ENCODE measurements at regions of chr7 and their contacts with region 1.

Region 1: GRCh38 chr7:88725754-88726153 is 33.7 kb upstream of the ZNF804B start:
- DNase-seq: no peak
- H3K4me3 ChIP-seq: no peak overlapping the region
- H3K27ac ChIP-seq: no peak overlapping the region
- H3K4me1 ChIP-seq: no peaks in the 10 kb centered on the region
- H3K27me3 ChIP-seq: no peaks in the 10 kb centered on the region
- CTCF ChIP-seq: no peak
- POLR2A ChIP-seq: no peak

Region 2: GRCh38 chr7:88735920-88736319 is 10.2 kb after region 1 on chr7:
- CTCF ChIA-PET with region 1: no interaction called
- POLR2A ChIA-PET with region 1: no interaction called
- dilution Hi-C with region 1: no loop called
- intact Hi-C with region 1: loop called (anchors 1 kb)
- DNase-seq: no peak
- H3K4me3 ChIP-seq: no peak overlapping the region
- H3K27ac ChIP-seq: no peak overlapping the region
- H3K4me1 ChIP-seq: no peaks in the 10 kb centered on the region
- H3K27me3 ChIP-seq: no peaks in the 10 kb centered on the region
- CTCF ChIP-seq: no peak
- POLR2A ChIP-seq: no peak

Region 3: DNA sequence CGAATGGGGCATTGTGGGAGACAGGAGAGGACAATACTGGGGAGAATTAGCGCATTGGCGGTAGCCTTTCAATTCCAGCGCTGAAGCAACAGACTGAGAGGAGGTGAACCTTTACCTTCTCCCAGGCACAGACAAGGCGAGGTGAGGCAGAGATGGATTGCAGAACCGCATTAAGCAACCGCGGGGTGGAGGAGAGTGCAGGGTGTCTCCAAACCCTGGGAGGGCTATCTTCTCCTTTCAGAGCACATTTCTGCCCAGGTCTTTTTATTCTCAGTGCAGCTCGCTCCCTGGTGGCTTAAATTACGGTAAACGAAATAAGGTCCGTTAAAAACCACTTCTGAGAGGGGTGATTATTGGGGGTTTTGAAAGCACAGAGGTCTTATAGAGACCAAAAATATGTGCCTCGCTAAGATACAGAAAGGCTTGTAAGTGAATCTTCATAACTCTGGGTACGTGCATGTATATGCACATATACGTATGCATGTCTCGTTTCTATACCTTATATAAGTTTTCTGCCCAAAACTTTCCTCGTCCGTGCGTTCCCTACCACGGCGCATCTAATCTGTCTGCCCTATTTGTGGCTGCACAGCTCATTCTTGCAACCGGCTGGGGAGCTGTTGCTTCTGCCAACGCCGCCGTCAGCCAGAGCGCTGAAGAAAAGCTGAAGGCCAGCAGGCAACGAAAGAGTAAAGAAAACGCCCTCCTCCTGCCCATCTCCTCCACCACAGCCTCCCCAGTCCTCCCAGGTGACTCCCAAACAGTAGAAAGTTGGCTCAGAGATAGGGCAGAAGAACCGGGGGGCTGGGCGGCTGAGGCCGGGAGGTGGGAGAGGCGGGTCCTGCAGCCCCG is 32.9 kb after region 1 on chr7:
- CTCF ChIA-PET with region 1: no interaction called
- POLR2A ChIA-PET with region 1: no interaction called
- dilution Hi-C with region 1: no loop called
- intact Hi-C with region 1: no loop called
- DNase-seq: peak; percentile 34
- H3K4me3 ChIP-seq: peak overlapping the region; percentile 2 to 32 (median 32)
- H3K27ac ChIP-seq: no peak overlapping the region
- H3K4me1 ChIP-seq: peaks cover 10% of the 10 kb centered on the region
- H3K27me3 ChIP-seq: peaks cover 25 to 64% of the 10 kb centered on the region in 2 experiments
- CTCF ChIP-seq: no peak
- POLR2A ChIP-seq: no peak

Measured in endothelial cell of umbilical vein (primary cell).